ENCODE measurements at regions of chr5 and their contacts with region 1.

Region 1: DNA sequence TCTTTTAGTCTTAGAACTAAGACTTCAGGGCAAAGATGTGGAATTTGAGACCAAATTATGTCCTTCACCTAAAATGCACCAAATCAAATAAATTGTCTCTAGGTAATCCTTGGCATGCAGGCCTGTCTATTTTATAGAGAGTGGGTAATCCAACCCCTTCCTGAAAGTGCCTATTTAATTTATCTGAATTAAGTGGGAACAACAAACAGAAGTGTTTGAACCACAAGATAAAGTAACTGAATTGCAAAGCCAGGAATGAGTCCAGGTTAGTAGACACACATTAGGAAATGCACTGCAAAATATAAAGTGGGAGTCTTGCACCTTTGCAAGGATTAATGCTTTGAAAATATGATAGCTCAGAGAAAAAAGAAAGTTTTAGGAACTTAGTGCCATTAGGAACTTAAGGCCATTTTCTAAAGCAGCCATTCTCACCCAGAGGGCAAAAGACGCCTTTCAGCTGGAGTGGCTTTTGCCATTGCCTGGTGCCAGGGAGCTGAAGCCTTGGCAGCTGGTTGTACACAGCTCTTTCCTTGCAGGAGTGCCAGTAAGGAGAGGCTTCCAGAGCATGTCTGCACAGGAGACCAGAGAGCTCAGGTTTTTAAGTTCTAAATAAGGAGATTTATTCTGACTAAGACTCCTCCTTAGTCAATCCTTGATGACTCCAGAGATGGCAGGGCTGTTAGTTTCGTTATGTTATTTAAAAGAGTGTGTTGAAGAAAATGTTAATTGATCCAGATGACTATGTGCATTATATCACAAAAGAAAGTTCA is 151.7 kb upstream of the ELL2 start:
- DNase-seq: no peak
- ATAC-seq: peak; percentile 71
- H3K4me3 Mint-ChIP-seq: no peak overlapping the region
- H3K27ac Mint-ChIP-seq: peak overlapping the region; percentile 84
- H3K4me1 Mint-ChIP-seq: peaks cover 35% of the 10 kb centered on the region
- H3K27me3 Mint-ChIP-seq: peaks cover 3% of the 10 kb centered on the region

Region 2: DNA sequence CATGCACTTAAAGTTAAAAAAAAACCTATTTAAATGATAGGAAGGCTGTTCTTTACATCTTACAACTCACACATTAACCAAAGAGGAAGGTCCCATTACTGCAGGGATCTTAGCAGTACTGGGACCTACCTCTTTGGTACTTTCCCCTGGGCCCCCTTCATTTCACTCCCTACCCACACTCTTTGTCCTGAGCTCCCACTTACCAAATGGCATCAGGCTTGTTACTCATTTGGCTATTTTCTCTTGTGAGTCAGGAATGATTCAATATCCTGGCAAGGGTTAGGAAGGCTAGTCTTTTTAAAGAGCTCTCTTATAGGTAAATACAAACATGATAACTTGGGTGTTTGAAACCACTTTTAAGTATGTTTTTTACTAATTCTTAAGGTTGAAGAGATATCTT is 34.3 kb before region 1 on chr5:
- CTCF ChIA-PET with region 1: interaction called, 3 read pairs
- POLR2A ChIA-PET with region 1: no interaction called
- intact Hi-C with region 1: loop called (anchors 1 to 2 kb)
- DNase-seq: peak; percentile 66
- ATAC-seq: peak; percentile 97
- H3K4me3 Mint-ChIP-seq: no peak overlapping the region
- H3K27ac Mint-ChIP-seq: peak overlapping the region; percentile 83
- H3K4me1 Mint-ChIP-seq: peaks cover 42% of the 10 kb centered on the region
- H3K27me3 Mint-ChIP-seq: peaks cover 18% of the 10 kb centered on the region

Region 3: GRCh38 chr5:96220610-96221390 is 107.4 kb after region 1 on chr5:
- CTCF ChIA-PET with region 1: no interaction called
- POLR2A ChIA-PET with region 1: no interaction called
- intact Hi-C with region 1: loop called in 1 of 2 experiments (anchors 2 kb)
- DNase-seq: peak; percentile 43
- ATAC-seq: peak; percentile 89
- H3K4me3 Mint-ChIP-seq: no peak overlapping the region
- H3K27ac Mint-ChIP-seq: peak overlapping the region; percentile 77
- H3K4me1 Mint-ChIP-seq: peaks cover 19% of the 10 kb centered on the region
- H3K27me3 Mint-ChIP-seq: peaks cover 13% of the 10 kb centered on the region

Region 4: GRCh38 chr5:96536991-96537785 is 423.8 kb after region 1 on chr5:
- CTCF ChIA-PET with region 1: no interaction called
- POLR2A ChIA-PET with region 1: no interaction called
- intact Hi-C with region 1: loop called in 1 of 2 experiments (anchors 10 kb)
- DNase-seq: no peak
- ATAC-seq: peak; percentile 86
- H3K4me3 Mint-ChIP-seq: peak overlapping the region; percentile 1
- H3K27ac Mint-ChIP-seq: peak overlapping the region; percentile 82
- H3K4me1 Mint-ChIP-seq: peaks cover 32% of the 10 kb centered on the region
- H3K27me3 Mint-ChIP-seq: no peaks in the 10 kb centered on the region

Measured in activated CD4-positive, alpha-beta T cell treated with anti-CD3 and anti-CD28 coated beads for 36 hours (primary cell).